Cardiac septum (tissue), 1 donor: ENCODE measurements at regions of chrX and their contacts with region 1.

Region 1: DNA sequence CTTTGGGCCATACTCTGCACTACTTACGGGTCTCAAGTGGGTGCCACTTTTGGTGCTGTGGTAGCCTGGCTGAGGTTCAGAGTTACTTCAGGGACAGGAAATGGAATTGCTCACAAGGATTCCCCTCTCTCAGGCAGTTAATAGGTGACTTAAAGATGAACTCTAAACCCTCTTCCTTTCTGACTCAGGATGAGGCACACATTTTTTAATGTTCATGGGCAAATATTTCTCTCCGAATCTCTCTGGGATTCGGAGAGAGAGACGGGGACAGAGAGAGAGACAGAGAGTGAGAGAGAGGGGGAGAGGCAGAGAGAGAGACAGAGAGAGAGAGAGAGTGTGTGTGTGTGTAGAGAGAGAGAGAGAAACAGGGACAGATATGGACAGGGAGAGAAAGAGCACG is 79.8 kb downstream of the NYX start:
- DNase-seq: no peak

Region 2: GRCh38 chrX:41441934-41442823 is 84.7 kb before region 1 on chrX:
- intact Hi-C with region 1: loop called (anchors 10 kb)
- DNase-seq: peak; percentile 95